BJ (cell line): ENCODE measurements at regions of chr12 and their contacts with region 1.

Region 1: GRCh38 chr12:77685112-77685511 is 145.6 kb upstream of the NAV3 start:
- DNase-seq: peak; percentile 9
- H3K4me3 ChIP-seq: no peak overlapping the region
- H3K27me3 ChIP-seq: no peaks in the 10 kb centered on the region
- CTCF ChIP-seq: peak; percentile 63

Region 2: GRCh38 chr12:77152623-77153193 is 532.4 kb before region 1 on chr12:
- CTCF ChIA-PET with region 1: interaction called, 52 read pairs
- POLR2A ChIA-PET with region 1: no interaction called
- DNase-seq: no peak
- H3K4me3 ChIP-seq: no peak overlapping the region
- H3K27me3 ChIP-seq: no peaks in the 10 kb centered on the region
- CTCF ChIP-seq: peak; percentile 68